Esophagus muscularis mucosa (tissue), 4 donors: ENCODE measurements at regions of chr16 and their contacts with region 1.

Region 1: DNA sequence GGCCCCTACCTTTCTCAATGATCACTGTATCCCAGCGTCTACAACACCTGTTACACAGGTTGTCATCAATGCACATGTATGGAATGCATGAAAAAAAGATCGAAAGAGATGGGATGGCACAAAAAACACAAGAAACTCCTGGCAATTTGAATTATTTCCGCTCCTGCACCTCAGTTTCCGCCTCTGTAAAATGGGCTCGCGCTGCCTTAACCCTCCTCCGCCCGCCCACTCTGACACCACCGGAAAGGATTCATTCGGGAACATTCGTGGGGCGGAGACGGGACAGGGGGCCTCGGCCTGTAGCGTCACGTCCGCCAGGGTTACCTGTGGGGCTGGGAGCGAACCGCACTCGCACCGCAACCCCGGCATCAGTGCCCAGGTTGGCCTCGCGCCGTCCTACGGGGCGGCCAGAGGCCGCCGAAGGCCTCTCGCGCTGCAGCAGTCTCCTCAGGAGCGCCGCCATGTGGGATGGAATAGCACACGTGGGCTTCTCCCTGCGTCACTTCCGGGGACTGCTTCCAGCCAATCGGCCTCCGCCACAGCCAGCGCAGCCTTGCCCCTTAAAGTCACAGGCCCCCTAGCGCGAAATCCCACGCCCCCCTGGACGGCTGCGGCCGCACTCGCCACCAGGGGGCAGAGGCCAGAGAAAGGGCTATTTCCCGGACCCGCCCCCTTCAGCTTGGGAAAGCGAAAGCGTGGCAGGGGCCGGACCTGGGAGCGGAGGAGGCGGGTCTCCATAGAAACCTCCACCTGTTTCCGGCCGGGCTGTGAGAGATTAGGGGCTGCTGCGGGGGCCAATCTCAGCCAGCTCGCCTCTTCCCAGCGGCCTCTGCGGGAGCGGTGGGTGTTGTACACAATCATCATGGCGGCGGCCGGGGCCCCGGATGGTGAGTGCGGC is at the starts of genes EARS2 and UBFD1:
- DNase-seq: peak; percentile 100
- H3K4me3 ChIP-seq: peak within 1 kb of the TSS; percentile 80 to 99 (median 94)
- H3K27ac ChIP-seq: peak within 1 kb of the TSS; percentile 91 to 97 (median 95)
- H3K4me1 ChIP-seq: peaks cover 22 to 49% (median 43%) of the 10 kb centered on the region in 4 donors
- H3K27me3 ChIP-seq: no peaks in the 10 kb centered on the region
- CTCF ChIP-seq: peak; percentile 90 to 95 (median 93)
- EP300 ChIP-seq: no peak
- POLR2A ChIP-seq: no peak
- total RNA-seq, gene EARS2: 14.2 to 24.4 (median 18.2) TPM
- total RNA-seq, gene UBFD1: 39.1 to 86.8 (median 65.5) TPM

Region 2: DNA sequence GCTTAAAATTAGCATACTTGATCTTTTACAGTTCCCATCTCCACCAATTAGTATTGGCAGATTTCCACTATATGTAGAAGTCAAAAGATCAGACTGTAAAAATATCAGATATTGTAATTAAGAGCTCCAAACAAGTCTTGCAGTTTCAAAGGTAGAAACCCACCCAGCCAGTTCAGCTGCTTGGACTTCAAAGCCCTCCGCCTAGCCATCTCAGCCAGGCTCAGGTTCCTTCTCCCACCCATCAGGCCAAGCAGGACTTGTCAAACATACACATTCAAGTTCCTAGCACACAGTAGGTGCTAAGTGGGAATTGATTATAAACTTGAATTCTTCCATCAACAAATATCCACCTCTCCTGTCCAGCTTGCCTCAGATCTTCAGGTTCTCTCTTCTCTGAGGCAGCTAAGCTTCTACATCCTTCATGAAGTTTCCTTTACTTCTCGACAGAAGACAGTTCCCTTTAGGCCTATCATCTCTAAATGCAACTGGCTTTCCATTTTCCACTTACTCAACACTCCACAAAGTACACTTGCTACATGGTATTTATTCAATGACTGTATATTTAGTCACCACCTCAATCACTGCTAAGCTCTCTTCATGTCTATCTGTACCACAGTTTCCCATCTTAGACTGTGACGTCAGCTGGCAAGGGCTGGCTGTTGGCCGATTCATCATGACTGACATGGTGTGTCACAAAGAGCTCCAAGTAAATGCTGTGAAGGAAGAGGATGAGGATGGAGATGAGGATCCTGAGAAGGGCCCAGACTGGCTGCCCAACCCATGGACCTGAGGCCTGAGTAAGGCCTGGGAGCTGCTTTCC is 90.9 kb before region 1 on chr16:
- intact Hi-C with region 1: no loop called
- DNase-seq: no peak
- H3K4me3 ChIP-seq: no peak overlapping the region
- H3K27ac ChIP-seq: no peak overlapping the region
- H3K4me1 ChIP-seq: peaks cover 10 to 18% (median 15%) of the 10 kb centered on the region in 4 donors
- H3K27me3 ChIP-seq: no peaks in the 10 kb centered on the region
- CTCF ChIP-seq: no peak
- EP300 ChIP-seq: no peak
- POLR2A ChIP-seq: no peak

Region 3: DNA sequence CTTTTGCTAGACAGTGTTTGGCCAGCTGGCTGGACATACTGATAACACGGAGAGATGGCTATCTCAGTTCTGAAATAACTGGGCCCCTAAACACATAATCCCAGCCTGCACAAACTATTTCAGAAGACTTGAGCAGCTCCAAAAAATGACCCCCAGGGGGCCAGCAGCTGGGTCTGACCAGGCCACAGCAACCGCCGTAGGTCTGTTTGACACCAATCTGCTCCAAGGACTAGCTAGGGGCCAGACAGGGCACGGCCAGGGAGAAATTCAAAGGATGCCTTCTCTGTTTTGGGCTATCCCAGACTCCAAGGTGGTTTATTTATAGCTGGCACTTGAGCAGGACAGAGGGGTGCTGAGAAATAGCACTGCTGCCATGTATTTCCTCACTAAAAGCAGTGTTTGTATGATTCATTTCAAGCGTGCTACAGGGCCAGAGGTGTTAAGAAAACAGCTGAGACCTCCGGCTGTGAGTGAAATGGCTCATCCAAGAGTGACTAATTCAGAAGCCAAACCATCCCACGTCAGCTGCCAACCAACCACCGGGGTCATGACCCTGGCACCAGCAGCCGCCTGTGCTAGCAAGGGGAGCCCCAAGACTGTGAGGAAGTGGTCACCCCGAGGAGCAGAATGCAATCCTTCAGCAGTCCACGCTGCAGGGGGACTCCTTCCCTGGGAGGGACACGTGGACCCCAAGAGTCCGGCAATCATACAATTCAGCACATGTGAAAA is 52.5 kb before region 1 on chr16:
- intact Hi-C with region 1: loop called (anchors 5 kb)
- DNase-seq: peak; percentile 92
- H3K4me3 ChIP-seq: no peak overlapping the region
- H3K27ac ChIP-seq: peak overlapping the region; percentile 57 to 80 (median 67)
- H3K4me1 ChIP-seq: peaks cover 43 to 76% (median 66%) of the 10 kb centered on the region in 4 donors
- H3K27me3 ChIP-seq: no peaks in the 10 kb centered on the region
- CTCF ChIP-seq: no peak
- EP300 ChIP-seq: no peak
- POLR2A ChIP-seq: no peak

Region 4: DNA sequence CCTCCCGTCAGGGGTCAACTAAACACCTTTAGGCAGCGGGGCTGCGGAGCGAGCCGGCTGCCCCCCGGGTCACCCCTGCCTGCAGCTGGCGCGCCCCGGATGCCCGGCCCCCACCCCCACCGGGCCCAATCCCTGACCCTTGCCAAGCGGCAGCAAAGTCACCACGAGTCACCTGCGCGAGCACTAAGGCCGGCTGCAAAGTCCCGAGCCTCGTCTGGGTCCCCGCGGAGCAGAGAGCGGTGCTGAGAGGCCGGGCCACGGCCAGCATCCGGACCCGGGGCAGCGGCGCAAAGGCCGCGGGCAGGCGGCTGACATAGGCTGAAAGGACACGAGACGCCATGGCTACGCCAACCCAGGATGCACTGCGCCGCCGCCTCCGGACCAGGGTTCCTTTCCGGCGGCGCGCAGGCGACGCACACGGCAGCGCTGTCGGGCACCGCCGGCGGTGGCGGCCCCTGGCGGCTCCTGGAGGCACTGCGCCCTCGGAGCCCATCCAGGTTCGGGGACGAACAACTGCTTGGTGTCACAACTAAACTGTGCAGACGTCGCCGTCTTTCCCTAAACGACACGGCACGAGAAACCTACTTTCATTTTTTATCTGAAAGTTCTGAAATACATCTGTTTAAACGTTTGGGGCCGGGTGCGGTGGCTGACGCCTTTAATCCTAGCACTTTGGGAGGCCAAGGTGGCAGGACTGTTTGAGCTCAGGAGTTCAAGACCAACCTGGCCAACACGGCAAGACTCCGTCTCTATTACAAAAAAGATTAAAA is 39.0 kb after region 1 on chr16 and contains the start of gene NDUFAB1:
- intact Hi-C with region 1: loop called (anchors 5 kb)
- DNase-seq: peak; percentile 93
- H3K4me3 ChIP-seq: peak within 1 kb of the TSS; percentile 75 to 99 (median 88)
- H3K27ac ChIP-seq: peak within 1 kb of the TSS; percentile 82 to 89 (median 88)
- H3K4me1 ChIP-seq: peaks cover 24 to 33% (median 30%) of the 10 kb centered on the region in 4 donors
- H3K27me3 ChIP-seq: no peaks in the 10 kb centered on the region
- CTCF ChIP-seq: peak in 2 of 3 experiments; percentile 100
- EP300 ChIP-seq: no peak
- POLR2A ChIP-seq: no peak
- total RNA-seq, gene NDUFAB1: 76.6 to 115 (median 84.4) TPM

Region 5: DNA sequence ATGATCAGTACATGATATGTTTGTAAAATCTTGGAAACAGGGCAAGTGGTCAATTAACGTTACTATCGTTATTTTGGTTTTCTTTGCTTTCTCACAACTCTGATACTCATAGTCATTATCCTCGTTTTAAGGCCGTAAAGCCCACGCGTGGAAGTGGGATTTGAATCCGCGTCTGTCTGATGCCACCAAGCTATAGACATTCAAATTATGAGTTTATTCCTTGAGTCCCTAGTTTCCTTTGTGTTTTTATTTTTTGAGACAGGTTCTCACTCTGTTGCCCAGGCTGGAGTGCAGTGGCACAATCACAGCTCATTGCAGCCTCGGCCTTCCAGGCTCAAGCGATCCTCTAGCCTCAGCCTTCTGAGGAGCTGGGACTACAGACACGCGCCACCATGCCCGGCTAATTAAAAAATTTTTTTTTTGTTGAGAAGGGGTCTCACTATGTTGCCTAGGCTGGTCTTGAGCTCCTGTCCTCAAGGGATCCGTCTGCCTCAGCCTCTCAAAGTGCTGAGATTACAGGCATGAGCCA is 85.2 kb after region 1 on chr16:
- intact Hi-C with region 1: loop called (anchors 2 kb)
- DNase-seq: no peak
- H3K4me3 ChIP-seq: peak overlapping the region; percentile 75 to 96 (median 88)
- H3K27ac ChIP-seq: peak overlapping the region in 1 of 4 donors; percentile 83
- H3K4me1 ChIP-seq: peaks cover 17 to 45% (median 33%) of the 10 kb centered on the region in 4 donors
- H3K27me3 ChIP-seq: no peaks in the 10 kb centered on the region
- CTCF ChIP-seq: no peak
- EP300 ChIP-seq: no peak
- POLR2A ChIP-seq: no peak

Region 6: GRCh38 chr16:23712976-23713375 is 155.8 kb after region 1 on chr16 and contains the start of gene ERN2:
- intact Hi-C with region 1: no loop called
- DNase-seq: no peak
- H3K4me3 ChIP-seq: no peak within 1 kb of the TSS
- H3K27ac ChIP-seq: no peak within 1 kb of the TSS
- H3K4me1 ChIP-seq: no peaks in the 10 kb centered on the region
- H3K27me3 ChIP-seq: peaks cover 0 to 71% (median 3%) of the 10 kb centered on the region in 4 donors
- CTCF ChIP-seq: no peak
- EP300 ChIP-seq: no peak
- POLR2A ChIP-seq: no peak
- total RNA-seq, gene ERN2: 0.11 TPM in 1 of 4 donors, not detected in the others